ENCODE measurements at regions of chr4 and their contacts with region 1.

Region 1: GRCh38 chr4:6732441-6733357 is 16.7 kb downstream of the BLOC1S4 start:
- DNase-seq: peak; percentile 77
- ATAC-seq: peak; percentile 86
- H3K4me3 ChIP-seq: peak overlapping the region; percentile 9 to 61 (median 39); a peak in 5 of 6 replicates
- H3K27ac ChIP-seq: peak overlapping the region; percentile 96
- H3K4me1 ChIP-seq: peaks cover 74% of the 10 kb centered on the region
- H3K27me3 ChIP-seq: no peaks in the 10 kb centered on the region
- CTCF ChIP-seq: no peak
- EP300 ChIP-seq: peak in 1 of 2 experiments; percentile 70; a peak in 2 of 4 replicates
- POLR2A ChIP-seq: peak in 1 of 2 experiments; percentile 73; a peak in 2 of 4 replicates
- RAD21 ChIP-seq: peak; percentile 30; the same call in 1 of the 2 replicates

Region 2: GRCh38 chr4:6192245-6192644 is 540.5 kb before region 1 on chr4:
- CTCF ChIA-PET with region 1: no interaction called
- POLR2A ChIA-PET with region 1: no interaction called
- in situ Hi-C with region 1: no loop called
- intact Hi-C with region 1: no loop called
- DNase-seq: peak; percentile 39
- ATAC-seq: peak; percentile 86
- H3K4me3 ChIP-seq: no peak overlapping the region
- H3K27ac ChIP-seq: no peak overlapping the region
- H3K4me1 ChIP-seq: 0 out of 2 replicates have a peak, but pooled peaks cover 6% of the 10 kb centered on the region
- H3K27me3 ChIP-seq: peaks cover 2 to 38% of the 10 kb centered on the region in 2 experiments
- CTCF ChIP-seq: peak; percentile 24; the same call in 1 of the 2 replicates
- EP300 ChIP-seq: no peak
- POLR2A ChIP-seq: no peak
- RAD21 ChIP-seq: peak; percentile 32; the same call in 1 of the 2 replicates

Region 3: DNA sequence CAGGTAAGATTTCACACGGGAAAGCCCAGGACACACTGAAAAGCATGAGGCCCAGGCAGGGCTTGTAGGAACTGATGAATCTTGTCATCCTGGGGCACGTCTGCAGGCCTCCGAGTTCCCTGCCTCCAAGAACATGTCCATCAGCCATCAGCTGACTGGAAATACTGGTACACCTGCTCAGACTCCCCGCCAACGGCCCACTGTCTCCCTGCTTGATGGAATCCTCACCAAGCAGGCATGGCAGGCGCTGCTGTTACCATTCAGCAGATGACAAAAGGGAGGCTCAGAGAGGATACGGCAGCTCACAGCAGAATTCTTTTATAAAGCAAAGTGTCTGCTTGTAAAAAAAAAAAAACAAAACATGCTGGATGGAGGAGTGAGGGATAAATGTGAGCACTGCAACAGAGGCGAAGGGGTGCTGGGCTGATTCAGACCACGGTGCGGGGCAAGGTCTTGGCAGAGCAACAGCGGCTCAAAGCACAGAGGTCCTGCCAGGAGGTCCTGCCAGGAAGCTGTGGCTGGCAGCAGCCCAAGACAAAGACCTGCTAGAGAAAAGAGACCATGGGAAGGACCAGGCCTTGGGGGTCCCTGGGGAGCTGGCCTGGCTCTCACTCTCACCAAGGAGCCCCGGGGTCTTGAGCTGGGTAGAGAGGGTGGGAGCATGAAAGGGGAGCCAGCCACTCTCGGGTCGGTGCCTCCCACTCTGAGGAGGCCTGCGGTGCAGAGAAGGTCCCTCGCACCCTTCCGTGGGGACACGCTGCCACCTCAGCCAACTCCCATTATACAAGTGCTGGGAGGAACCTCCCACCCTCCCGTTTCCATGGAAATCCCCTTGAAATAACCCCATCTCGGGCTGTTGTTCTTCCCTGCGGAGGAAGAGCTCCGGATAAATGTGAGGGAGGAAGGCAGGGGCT is 285.9 kb before region 1 on chr4:
- CTCF ChIA-PET with region 1: no interaction called
- POLR2A ChIA-PET with region 1: no interaction called
- in situ Hi-C with region 1: no loop called
- intact Hi-C with region 1: no loop called
- DNase-seq: no peak
- ATAC-seq: no peak
- H3K4me3 ChIP-seq: no peak overlapping the region
- H3K27ac ChIP-seq: no peak overlapping the region
- H3K4me1 ChIP-seq: no peaks in the 10 kb centered on the region
- H3K27me3 ChIP-seq: peaks cover 12 to 88% of the 10 kb centered on the region in 2 experiments
- CTCF ChIP-seq: no peak
- EP300 ChIP-seq: no peak
- POLR2A ChIP-seq: no peak
- RAD21 ChIP-seq: no peak

Region 4: GRCh38 chr4:6749341-6750171 is 16.9 kb after region 1 on chr4:
- CTCF ChIA-PET with region 1: no interaction called
- POLR2A ChIA-PET with region 1: interaction called, 68 read pairs
- in situ Hi-C with region 1: no loop called
- intact Hi-C with region 1: loop called (anchors 2 kb)
- DNase-seq: peak; percentile 91
- ATAC-seq: peak; percentile 88
- H3K4me3 ChIP-seq: peak overlapping the region; percentile 58 to 74 (median 63)
- H3K27ac ChIP-seq: peak overlapping the region; percentile 83
- H3K4me1 ChIP-seq: peaks cover 89% of the 10 kb centered on the region
- H3K27me3 ChIP-seq: no peaks in the 10 kb centered on the region; a peak in 1 of 5 replicates
- CTCF ChIP-seq: peak; percentile 38
- EP300 ChIP-seq: peak; percentile 32 to 61; a peak in 2 of 4 replicates
- POLR2A ChIP-seq: peak in 1 of 2 experiments; percentile 60; a peak in 1 of 4 replicates
- RAD21 ChIP-seq: peak; percentile 62

Region 5: GRCh38 chr4:6754785-6755753 is 22.4 kb after region 1 on chr4:
- CTCF ChIA-PET with region 1: no interaction called
- POLR2A ChIA-PET with region 1: interaction called, 68 read pairs
- in situ Hi-C with region 1: no loop called
- intact Hi-C with region 1: loop called (anchors 2 kb)
- DNase-seq: peak; percentile 92
- ATAC-seq: peak; percentile 77
- H3K4me3 ChIP-seq: no peak overlapping the region
- H3K27ac ChIP-seq: peak overlapping the region; percentile 61
- H3K4me1 ChIP-seq: peaks cover 62% of the 10 kb centered on the region
- H3K27me3 ChIP-seq: no peaks in the 10 kb centered on the region; a peak in 1 of 5 replicates
- CTCF ChIP-seq: 0 out of 2 replicates have a peak, but pooled peaks have one; percentile 32
- EP300 ChIP-seq: peak in 1 of 2 experiments; percentile 89; a peak in 2 of 4 replicates
- POLR2A ChIP-seq: no peak; a peak in 1 of 4 replicates
- RAD21 ChIP-seq: no peak

Region 6: DNA sequence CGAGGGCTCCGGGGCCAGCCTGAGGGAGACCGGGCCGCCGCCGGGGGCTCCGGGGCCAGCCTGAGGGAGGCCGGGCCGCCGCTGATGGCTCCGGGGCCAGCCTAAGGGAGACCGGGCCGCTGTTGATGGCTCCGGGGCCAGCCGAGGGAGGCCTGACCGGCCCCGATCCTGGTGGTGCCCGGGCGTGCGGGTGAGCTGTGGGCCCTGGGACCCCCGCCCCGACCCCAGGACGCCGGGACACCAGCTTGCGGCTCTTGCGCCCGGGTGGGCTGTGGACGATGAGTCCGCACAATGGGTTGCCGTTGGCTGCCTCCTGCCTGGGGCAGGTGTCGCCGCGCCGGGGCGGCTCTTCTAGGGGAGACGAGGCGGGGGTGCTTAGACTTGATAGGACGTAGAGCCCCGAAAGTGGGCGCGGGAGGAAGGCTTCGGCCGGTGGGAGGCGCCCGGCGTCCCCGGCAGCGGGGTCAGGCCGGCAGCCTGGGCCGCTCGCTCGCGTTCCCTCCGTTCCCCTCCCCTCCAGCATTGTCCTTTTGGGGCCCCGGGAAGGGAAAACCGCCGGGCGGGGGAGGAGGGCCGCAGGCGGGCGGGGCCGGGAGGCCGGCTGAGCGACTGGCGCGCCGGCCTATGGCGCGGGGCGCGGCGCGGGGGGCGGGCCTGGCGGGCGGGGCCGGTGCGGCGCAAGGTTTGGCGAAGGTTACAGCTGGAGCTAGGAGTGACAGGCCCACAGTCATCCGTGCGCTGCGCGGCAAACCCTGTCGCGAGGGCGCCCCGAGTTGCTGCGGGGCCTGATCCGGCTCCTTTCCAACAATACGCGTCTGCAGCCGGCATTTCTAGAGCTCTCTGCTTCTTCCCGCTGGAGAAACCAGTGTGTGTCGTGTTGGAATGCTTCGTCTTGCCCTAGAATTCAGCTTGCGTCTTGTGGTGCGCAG is 50.6 kb after region 1 on chr4:
- CTCF ChIA-PET with region 1: no interaction called
- POLR2A ChIA-PET with region 1: interaction called, 4 read pairs
- in situ Hi-C with region 1: no loop called
- intact Hi-C with region 1: loop called (anchors 5 kb)
- DNase-seq: peak; percentile 80
- ATAC-seq: peak; percentile 74
- H3K4me3 ChIP-seq: peak overlapping the region; percentile 93 to 98 (median 95)
- H3K27ac ChIP-seq: peak overlapping the region; percentile 93
- H3K4me1 ChIP-seq: peaks cover 59% of the 10 kb centered on the region
- H3K27me3 ChIP-seq: no peaks in the 10 kb centered on the region; a peak in 1 of 5 replicates
- CTCF ChIP-seq: peak; percentile 65
- EP300 ChIP-seq: 0 out of 4 replicates have a peak, but pooled peaks have one; percentile 25 to 31
- POLR2A ChIP-seq: peak in 1 of 2 experiments; percentile 58; a peak in 2 of 4 replicates
- RAD21 ChIP-seq: no peak; the same call in none of the 2 replicates

Measured in HepG2 (cell line).